Astrocyte of the cerebellum (primary cell): ENCODE measurements at regions of chr5 and their contacts with region 1.

Region 1: GRCh38 chr5:133944263-133945185 is 23.9 kb downstream of the C5orf15 start:
- DNase-seq: no peak
- H3K4me3 ChIP-seq: no peak overlapping the region
- CTCF ChIP-seq: peak; percentile 72

Region 2: DNA sequence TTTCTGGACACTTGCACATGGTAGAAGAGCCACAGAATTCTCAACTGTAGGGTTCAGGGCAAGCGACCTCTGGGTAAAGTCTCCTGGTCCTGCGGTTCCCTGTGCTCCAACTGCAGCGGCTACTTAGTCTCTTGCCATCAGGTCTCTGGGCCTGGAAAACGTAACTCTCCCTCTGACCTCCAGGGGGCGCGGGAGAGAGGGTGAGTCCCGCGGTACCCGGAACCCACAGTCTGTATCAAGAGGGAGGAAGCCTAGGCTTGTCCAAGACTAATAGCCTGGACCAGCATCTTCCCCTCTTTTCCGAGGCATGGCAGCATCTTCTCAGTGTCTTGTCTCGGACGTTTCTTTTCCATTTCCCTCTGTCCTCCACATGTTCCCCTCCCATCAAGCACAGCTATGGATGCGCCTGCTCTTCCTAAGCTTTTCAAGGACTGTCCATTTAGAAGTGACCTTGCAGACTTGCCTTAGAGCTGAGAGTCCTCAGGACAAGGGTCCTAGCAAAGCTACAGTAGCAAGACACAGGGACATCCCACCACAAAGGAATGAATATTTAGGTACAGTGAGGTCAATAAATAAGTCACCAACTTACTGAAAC is 391.5 kb before region 1 on chr5:
- in situ Hi-C with region 1: loop called (anchors 10 kb)
- DNase-seq: no peak
- H3K4me3 ChIP-seq: no peak overlapping the region
- CTCF ChIP-seq: peak; percentile 70

Region 3: GRCh38 chr5:133881576-133882388 is 62.7 kb before region 1 on chr5:
- in situ Hi-C with region 1: no loop called
- DNase-seq: no peak
- H3K4me3 ChIP-seq: no peak overlapping the region
- CTCF ChIP-seq: no peak